ENCODE measurements at regions of chr15 and their contacts with region 1.

Region 1: DNA sequence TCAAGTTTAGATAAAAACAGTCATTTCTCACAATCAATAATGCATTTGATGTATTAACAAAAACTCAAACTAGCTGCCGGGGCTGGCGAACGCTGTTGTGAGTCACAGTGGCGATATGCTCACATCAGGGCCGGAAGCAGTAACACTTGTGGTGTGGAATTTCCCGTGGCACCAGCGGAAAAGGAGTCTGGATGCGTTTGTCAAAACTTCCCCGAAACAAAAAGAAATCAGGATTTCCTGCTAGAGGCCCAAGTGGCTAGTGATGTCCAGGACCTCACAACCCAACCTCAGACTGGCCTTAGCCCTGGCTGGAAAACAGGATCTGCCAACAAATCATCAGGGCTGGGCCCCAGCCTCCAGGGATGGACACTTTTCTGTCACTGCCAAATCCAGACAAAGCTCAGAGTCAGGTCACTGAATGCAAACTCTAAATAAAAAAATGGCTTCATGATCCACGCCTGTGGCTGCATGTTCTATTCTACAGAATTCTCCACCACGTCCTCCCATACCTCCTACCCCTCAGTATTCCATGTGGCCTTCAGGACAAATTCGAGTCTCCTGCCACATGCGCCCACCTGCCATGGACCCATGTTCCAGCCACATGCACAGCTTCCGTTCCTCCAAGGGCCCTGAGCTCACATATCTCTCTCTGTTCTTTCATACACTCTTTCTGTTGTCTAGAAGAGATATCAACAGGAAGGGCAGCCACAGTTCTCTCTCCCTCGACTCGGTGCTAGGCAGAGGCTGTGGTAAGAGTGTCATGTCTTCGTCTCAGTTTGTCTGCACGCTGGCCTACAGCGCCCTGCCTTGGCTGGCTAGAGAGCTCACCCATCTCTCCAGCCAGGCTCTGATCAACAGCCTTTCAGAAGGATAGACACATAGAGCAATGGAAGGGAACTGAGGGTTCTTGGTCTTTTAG is 35.4 kb downstream of the EHD4 start:
- DNase-seq: peak; percentile 94
- H3K4me3 Mint-ChIP-seq: peak overlapping the region; percentile 68
- H3K27ac Mint-ChIP-seq: peak overlapping the region; percentile 98
- H3K4me1 Mint-ChIP-seq: peaks cover 83% of the 10 kb centered on the region
- H3K27me3 Mint-ChIP-seq: no peaks in the 10 kb centered on the region

Region 2: DNA sequence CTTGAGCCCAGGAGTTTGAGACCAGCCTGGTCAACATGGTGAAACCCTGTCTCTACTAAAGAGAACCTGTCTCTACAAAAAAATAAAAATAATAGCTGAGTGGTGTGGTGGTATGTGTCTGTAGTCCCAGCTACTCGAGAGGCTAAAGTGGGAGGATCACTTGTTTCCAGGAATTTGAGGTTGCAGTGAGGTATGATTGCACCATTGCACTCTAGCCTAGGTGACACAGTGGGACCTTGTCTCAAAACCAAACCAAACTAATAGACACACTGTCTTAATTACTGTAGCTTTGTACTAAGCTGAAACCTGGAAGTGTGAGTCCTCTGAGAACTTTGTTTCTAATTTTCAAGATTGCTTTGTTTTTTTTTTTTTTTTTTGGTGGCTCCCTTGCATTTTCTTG is 246.3 kb before region 1 on chr15:
- CTCF ChIA-PET with region 1: no interaction called
- POLR2A ChIA-PET with region 1: no interaction called
- intact Hi-C with region 1: loop called (anchors 1 kb)
- DNase-seq: peak; percentile 48
- H3K4me3 Mint-ChIP-seq: no peak overlapping the region
- H3K27ac Mint-ChIP-seq: peak overlapping the region; percentile 80
- H3K4me1 Mint-ChIP-seq: peaks cover 63% of the 10 kb centered on the region
- H3K27me3 Mint-ChIP-seq: no peaks in the 10 kb centered on the region

Region 3: GRCh38 chr15:41870689-41871081 is 66.2 kb before region 1 on chr15:
- CTCF ChIA-PET with region 1: no interaction called
- POLR2A ChIA-PET with region 1: interaction called, 3 read pairs
- intact Hi-C with region 1: loop called (anchors 1 kb)
- DNase-seq: peak; percentile 87
- H3K4me3 Mint-ChIP-seq: peak overlapping the region; percentile 7
- H3K27ac Mint-ChIP-seq: peak overlapping the region; percentile 77
- H3K4me1 Mint-ChIP-seq: peaks cover 20% of the 10 kb centered on the region
- H3K27me3 Mint-ChIP-seq: no peaks in the 10 kb centered on the region

Region 4: GRCh38 chr15:41881920-41882688 is 54.8 kb before region 1 on chr15:
- CTCF ChIA-PET with region 1: no interaction called
- POLR2A ChIA-PET with region 1: no interaction called
- intact Hi-C with region 1: no loop called
- DNase-seq: no peak
- H3K4me3 Mint-ChIP-seq: no peak overlapping the region
- H3K27ac Mint-ChIP-seq: no peak overlapping the region
- H3K4me1 Mint-ChIP-seq: peaks cover 7% of the 10 kb centered on the region
- H3K27me3 Mint-ChIP-seq: peaks cover 7% of the 10 kb centered on the region

Region 5: DNA sequence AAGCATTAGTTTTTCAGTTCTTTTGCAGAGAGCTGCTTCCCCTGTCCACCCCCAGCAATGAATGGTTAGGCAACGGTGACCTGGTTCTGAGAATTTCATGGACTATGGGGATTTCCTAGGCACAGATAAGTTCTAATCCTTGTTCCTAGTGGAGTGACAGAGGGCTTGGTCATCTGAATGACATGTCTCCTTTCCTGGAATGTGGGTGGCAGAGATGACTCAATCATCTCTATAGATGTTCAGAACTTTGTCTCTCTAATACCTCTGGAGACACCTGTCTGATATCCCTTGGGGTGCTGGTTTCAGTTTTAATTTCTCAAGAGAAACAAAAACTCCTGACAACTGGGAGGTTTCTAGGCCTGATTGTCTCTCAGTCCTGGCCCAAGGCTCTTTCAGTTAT is 73.5 kb after region 1 on chr15:
- CTCF ChIA-PET with region 1: no interaction called
- POLR2A ChIA-PET with region 1: no interaction called
- intact Hi-C with region 1: loop called (anchors 1 kb)
- DNase-seq: peak; percentile 44
- H3K4me3 Mint-ChIP-seq: no peak overlapping the region
- H3K27ac Mint-ChIP-seq: peak overlapping the region; percentile 71
- H3K4me1 Mint-ChIP-seq: peaks cover 27% of the 10 kb centered on the region
- H3K27me3 Mint-ChIP-seq: no peaks in the 10 kb centered on the region

Region 6: GRCh38 chr15:42107473-42107872 is 170.6 kb after region 1 on chr15:
- CTCF ChIA-PET with region 1: no interaction called
- POLR2A ChIA-PET with region 1: interaction called, 5 read pairs
- intact Hi-C with region 1: loop called (anchors 1 kb)
- DNase-seq: peak; percentile 87
- H3K4me3 Mint-ChIP-seq: peak overlapping the region; percentile 10
- H3K27ac Mint-ChIP-seq: peak overlapping the region; percentile 11
- H3K4me1 Mint-ChIP-seq: peaks cover 16% of the 10 kb centered on the region
- H3K27me3 Mint-ChIP-seq: peaks cover 23% of the 10 kb centered on the region